Brain microvascular endothelial cell (primary cell): ENCODE measurements at regions of chr17 and their contacts with region 1.

Region 1: DNA sequence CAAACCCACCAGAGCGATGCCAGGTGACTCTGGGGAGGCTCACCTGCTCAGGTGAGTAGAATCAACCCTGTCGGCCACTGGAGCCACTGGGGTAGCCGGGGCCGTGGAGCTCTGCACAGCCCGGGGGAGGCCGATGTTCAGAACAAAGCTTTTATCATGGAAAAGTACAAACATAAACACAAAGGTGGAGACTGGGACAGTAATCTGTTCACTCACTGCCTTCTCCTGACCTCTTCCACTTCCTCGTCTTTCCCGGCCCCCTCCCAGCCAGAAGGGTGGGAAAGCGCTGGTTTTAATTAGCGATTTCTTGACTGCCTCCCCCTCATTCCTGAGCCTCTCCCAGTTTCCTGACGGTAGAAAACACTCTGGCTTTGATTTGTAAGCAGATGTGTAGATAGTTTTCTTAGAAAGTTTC is 9.8 kb upstream of the TEX19 start:
- DNase-seq: no peak
- H3K4me3 ChIP-seq: no peak overlapping the region
- H3K27ac ChIP-seq: no peak overlapping the region
- H3K27me3 ChIP-seq: no peaks in the 10 kb centered on the region
- CTCF ChIP-seq: no peak

Region 2: GRCh38 chr17:82257473-82257872 is 91.8 kb before region 1 on chr17:
- in situ Hi-C with region 1: no loop called
- DNase-seq: peak; percentile 55
- H3K4me3 ChIP-seq: no peak overlapping the region
- H3K27ac ChIP-seq: peak overlapping the region; percentile 19
- H3K27me3 ChIP-seq: no peaks in the 10 kb centered on the region
- CTCF ChIP-seq: no peak

Region 3: GRCh38 chr17:82418001-82418986 is 69.0 kb after region 1 on chr17 and contains the starts of genes HEXD and OGFOD3:
- in situ Hi-C with region 1: loop called (anchors 10 kb)
- DNase-seq: peak; percentile 63
- H3K4me3 ChIP-seq: peak within 1 kb of the TSS; percentile 77
- H3K27ac ChIP-seq: peak within 1 kb of the TSS; percentile 35
- H3K27me3 ChIP-seq: no peaks in the 10 kb centered on the region
- CTCF ChIP-seq: no peak